MCF 10A (cell line): ENCODE measurements at regions of chr2 and their contacts with region 1.

Region 1: DNA sequence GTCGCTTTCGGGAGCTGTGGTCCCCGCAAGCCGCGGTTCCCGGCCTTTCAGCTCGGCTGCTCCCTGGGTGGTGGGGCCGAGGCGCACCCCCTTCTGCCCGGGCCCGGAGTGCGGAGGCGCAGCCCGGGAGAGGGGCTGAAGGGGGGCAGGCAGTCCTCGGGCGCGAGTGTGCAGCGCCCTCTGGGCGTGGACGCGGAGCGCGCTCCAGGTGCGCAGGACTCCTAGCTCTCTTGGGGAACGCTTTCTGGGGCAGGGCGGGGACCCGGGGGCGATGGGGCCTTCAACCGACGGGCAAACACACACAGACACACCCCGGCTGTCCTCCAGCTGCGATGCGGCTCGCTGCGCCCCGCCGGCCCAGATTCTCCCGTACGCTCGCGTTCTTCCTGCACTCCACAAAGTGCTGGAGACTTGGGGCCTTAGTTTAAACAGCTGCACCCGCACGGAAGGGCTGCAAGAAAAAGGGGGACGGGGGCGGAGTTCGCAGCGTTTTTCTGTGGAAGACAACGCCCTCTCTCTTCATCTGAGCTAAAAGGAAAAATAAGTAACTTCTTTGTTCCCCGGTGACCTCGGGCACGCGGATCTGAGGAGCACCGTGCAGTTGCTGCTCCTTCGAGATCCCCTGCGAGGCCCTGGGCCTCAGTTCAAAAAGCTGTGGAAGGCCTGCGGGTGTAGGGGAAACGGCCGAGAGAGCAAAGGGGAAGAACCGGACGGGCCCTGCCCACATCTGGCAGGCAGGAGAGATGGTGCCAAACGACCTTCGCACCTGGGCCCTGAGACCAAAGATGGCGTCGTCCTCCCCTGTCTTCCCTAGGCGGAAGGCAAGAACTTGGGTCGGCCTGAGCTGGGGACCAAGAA is 593 bp upstream of the SDC1 start:
- DNase-seq: peak; percentile 81
- H3K4me3 Mint-ChIP-seq: peak overlapping the region; percentile 75
- H3K27ac Mint-ChIP-seq: peak overlapping the region; percentile 59
- H3K4me1 Mint-ChIP-seq: peaks cover 25% of the 10 kb centered on the region
- H3K27me3 Mint-ChIP-seq: no peaks in the 10 kb centered on the region
- CTCF ChIP-seq: peak; percentile 79

Region 2: DNA sequence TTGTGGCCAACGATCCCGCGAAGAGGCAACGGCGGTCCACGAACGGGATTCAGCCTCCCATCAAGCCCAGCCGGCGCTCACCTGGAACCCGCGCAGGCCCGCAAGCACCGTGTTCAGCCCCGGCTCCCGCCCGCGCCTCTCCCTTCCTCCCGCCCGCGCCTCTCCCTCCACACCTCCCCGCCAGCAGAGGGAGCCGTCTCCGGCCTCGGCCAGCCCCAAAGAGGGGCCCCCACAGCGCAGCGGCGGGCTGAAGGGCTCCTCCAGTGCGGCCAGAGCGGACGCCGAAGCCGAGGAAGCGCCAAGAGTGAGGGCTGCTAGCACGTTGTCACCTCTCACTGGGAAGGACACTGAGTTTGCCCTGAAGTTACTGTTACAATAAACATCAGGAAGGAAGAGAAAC is 118.8 kb before region 1 on chr2:
- CTCF ChIA-PET with region 1: interaction called, 140 read pairs
- POLR2A ChIA-PET with region 1: interaction called, 39 read pairs
- intact Hi-C with region 1: loop called (anchors 1 kb)
- DNase-seq: peak; percentile 45
- H3K4me3 Mint-ChIP-seq: peak overlapping the region; percentile 68
- H3K27ac Mint-ChIP-seq: peak overlapping the region; percentile 40
- H3K4me1 Mint-ChIP-seq: peaks cover 17% of the 10 kb centered on the region
- H3K27me3 Mint-ChIP-seq: no peaks in the 10 kb centered on the region
- CTCF ChIP-seq: peak; percentile 40

Region 3: GRCh38 chr2:20135631-20136050 is 89.9 kb before region 1 on chr2:
- CTCF ChIA-PET with region 1: interaction called, 17 read pairs
- POLR2A ChIA-PET with region 1: interaction called, 8 read pairs
- intact Hi-C with region 1: loop called (anchors 1 kb)
- DNase-seq: peak; percentile 68
- H3K4me3 Mint-ChIP-seq: no peak overlapping the region
- H3K27ac Mint-ChIP-seq: no peak overlapping the region
- H3K4me1 Mint-ChIP-seq: peaks cover 21% of the 10 kb centered on the region
- H3K27me3 Mint-ChIP-seq: no peaks in the 10 kb centered on the region
- CTCF ChIP-seq: peak; percentile 72

Region 4: GRCh38 chr2:20141122-20141762 is 84.3 kb before region 1 on chr2:
- CTCF ChIA-PET with region 1: interaction called, 17 read pairs
- POLR2A ChIA-PET with region 1: interaction called, 8 read pairs
- intact Hi-C with region 1: loop called (anchors 1 kb)
- DNase-seq: peak; percentile 99
- H3K4me3 Mint-ChIP-seq: no peak overlapping the region
- H3K27ac Mint-ChIP-seq: peak overlapping the region; percentile 77
- H3K4me1 Mint-ChIP-seq: peaks cover 35% of the 10 kb centered on the region
- H3K27me3 Mint-ChIP-seq: no peaks in the 10 kb centered on the region
- CTCF ChIP-seq: no peak

Region 5: DNA sequence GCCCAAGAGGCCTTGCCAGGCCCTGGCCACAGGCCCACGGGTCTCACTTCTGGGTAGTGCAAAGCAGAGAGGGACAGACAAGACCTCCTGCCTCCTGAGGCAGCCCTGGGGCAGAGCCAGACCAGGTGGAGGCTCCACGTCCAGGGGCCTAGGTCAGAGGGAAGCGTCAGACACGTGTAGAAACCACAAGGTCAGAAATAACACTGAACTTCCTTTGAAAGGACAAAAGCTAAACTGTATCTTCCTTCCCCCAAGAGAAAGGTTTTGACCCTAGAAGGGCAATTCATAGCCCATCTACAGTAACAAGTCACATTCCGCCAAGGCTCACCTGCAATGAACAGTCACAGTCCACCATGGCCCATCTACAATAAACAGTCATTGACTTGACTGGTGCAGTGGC is 18.5 kb before region 1 on chr2:
- CTCF ChIA-PET with region 1: interaction called, 32 read pairs
- POLR2A ChIA-PET with region 1: interaction called, 222 read pairs
- intact Hi-C with region 1: no loop called
- DNase-seq: no peak
- H3K4me3 Mint-ChIP-seq: no peak overlapping the region
- H3K27ac Mint-ChIP-seq: peak overlapping the region; percentile 94
- H3K4me1 Mint-ChIP-seq: peaks cover 48% of the 10 kb centered on the region
- H3K27me3 Mint-ChIP-seq: no peaks in the 10 kb centered on the region
- CTCF ChIP-seq: no peak

Region 6: GRCh38 chr2:20212459-20212870 is 13.1 kb before region 1 on chr2:
- CTCF ChIA-PET with region 1: interaction called, 23 read pairs
- POLR2A ChIA-PET with region 1: interaction called, 222 read pairs
- intact Hi-C with region 1: no loop called
- DNase-seq: peak; percentile 90
- H3K4me3 Mint-ChIP-seq: peak overlapping the region; percentile 59
- H3K27ac Mint-ChIP-seq: peak overlapping the region; percentile 88
- H3K4me1 Mint-ChIP-seq: peaks cover 73% of the 10 kb centered on the region
- H3K27me3 Mint-ChIP-seq: no peaks in the 10 kb centered on the region
- CTCF ChIP-seq: no peak

Region 7: DNA sequence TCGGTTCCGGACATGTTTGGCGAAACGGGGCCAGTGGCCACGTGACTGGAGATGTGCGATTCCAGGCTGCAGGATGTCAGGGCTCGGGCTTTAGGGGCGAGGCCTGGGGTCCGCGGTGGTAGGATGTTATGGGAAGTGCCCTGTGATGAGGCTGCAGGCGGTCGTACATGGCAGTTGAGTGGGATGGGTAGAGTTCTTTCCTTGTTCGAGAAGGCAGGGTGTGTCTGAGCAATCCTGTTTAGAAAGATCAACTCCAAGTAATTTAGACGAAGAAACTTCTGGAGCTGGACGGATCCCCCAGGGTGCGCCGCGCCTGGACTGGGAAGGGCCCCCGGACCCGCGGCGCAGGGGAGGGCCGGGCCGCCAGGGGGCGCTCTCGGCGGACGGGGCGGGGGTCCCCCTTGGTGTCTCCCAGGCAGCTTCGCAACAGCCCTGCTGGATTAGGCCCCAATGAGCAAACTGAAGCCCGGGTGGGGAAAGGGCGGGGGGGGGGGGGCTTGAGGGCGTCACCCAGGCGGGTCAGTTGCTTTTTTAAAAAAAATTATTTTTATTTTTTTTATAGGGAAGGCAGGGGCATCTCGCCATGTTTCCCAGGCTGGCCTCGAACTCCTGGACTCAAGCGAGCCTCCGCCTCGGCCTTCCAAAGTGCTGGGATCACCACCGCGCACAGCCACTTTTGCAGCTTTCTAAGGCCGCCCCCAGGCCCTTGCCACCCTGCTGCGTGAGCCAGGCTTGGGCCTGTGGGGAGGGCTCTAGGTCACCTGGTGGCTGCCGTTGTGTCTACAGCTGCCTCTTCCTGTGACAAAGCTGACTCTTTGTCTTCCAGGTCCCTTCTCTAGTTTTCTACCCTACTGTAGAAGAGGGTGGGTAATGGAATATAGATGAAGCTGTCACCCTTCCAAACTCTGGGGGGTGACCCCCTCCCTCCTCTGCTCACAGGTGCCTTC is 16.8 kb after region 1 on chr2:
- CTCF ChIA-PET with region 1: interaction called, 14 read pairs
- POLR2A ChIA-PET with region 1: interaction called, 10 read pairs
- intact Hi-C with region 1: no loop called
- DNase-seq: no peak
- H3K4me3 Mint-ChIP-seq: no peak overlapping the region
- H3K27ac Mint-ChIP-seq: no peak overlapping the region
- H3K4me1 Mint-ChIP-seq: peaks cover 10% of the 10 kb centered on the region
- H3K27me3 Mint-ChIP-seq: no peaks in the 10 kb centered on the region
- CTCF ChIP-seq: peak; percentile 66